A673 (cell line): ENCODE measurements at regions of chr17 and their contacts with region 1.

Region 1: GRCh38 chr17:74961657-74962490 is 10.7 kb downstream of the HID1 start:
- DNase-seq: peak; percentile 91
- H3K4me3 ChIP-seq: no peak overlapping the region
- H3K27ac ChIP-seq: no peak overlapping the region
- H3K4me1 ChIP-seq: no peaks in the 10 kb centered on the region
- H3K27me3 ChIP-seq: no peaks in the 10 kb centered on the region
- CTCF ChIP-seq: peak; percentile 75

Region 2: DNA sequence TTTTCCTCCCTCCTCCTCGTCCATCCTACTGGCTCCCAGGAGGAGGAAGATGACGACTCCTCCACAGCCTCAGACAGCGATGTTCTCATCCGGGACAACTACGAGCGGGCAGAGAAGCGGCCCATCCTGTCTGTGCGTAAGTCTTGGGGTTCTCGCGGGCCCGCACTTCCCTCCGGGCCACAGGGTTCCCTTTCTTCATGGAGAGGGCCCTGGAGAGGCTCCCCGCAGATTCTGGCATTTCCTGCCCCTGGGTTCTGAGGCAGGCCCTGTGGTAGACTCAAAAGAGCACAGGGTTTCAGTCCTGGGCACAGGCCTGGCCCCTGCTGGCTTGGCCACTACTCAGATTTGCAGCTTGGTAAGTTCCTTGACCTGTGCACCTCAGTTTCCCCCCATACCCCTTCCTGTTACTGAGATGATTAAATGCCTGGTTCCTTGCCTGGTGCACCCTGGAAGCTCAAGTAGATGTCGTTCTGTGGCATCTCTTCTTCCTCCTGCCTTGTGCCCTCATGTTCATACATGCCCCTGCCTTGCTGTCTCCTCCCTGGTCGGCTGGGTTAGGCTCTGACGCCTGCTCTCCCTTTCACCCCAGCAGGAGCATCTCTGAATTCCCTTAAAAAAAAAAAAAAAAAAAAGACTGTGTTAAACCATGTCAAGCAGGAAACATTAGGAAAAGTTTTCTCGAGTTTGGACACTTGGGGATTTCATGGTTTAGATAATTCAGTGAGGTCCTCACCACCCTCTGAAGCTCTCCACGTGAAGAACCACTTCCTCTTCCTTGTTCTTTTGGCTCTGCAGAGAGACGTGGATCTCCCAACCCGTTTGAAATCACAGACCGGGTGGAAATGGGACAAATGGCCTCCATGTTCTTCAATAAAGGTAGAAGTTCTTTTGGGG is 171.5 kb before region 1 on chr17:
- CTCF ChIA-PET with region 1: interaction called, 9 read pairs
- POLR2A ChIA-PET with region 1: no interaction called
- intact Hi-C with region 1: loop called (anchors 1 kb)
- DNase-seq: peak; percentile 30
- H3K4me3 ChIP-seq: no peak overlapping the region
- H3K27ac ChIP-seq: no peak overlapping the region
- H3K4me1 ChIP-seq: no peaks in the 10 kb centered on the region
- H3K27me3 ChIP-seq: no peaks in the 10 kb centered on the region
- CTCF ChIP-seq: no peak

Region 3: DNA sequence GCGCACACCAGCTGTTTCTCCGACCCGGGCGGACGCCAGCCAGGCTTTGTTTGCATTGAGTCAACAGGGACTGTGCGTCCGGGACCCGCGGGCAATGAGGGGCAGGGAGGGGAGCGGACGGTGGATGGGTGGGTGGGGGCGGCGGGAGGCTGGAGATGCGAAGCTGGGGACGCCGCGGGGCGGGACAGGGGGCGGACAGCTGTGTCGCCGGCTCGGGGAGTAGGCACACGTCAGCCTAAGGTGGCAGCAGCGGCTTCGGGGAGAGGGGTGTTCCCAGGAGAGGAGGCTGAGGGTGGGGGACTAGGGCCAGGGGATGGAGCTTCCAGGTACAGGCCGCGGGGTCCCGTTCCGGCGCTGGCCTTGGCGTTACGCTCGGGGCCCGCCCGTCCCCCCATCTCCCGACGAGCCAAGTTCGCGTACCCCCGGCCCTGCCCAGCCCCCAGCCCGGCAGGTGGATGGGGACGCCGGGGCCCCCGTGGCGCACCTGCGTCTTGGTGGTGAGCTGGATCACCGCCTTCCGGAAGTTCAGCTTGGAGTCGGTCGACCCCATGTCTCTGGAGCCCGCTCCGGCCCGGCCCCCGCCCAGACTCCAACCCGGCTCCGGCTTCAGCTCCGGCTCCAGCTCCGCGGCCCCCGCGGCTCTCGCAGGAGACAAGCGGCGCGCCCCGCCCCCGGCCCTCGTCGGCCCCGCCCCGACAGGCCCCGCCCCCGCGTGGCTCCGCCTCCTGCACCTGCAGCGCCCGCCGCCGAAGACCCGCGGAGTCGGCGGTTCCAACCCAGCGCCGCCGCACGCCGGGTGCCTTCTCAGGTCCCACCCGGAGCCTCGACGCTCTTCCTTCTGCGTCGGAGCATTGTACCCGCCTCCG is 10.5 kb after region 1 on chr17 and contains the start of gene HID1:
- CTCF ChIA-PET with region 1: interaction called, 11 read pairs
- POLR2A ChIA-PET with region 1: interaction called, 4 read pairs
- intact Hi-C with region 1: no loop called
- DNase-seq: peak; percentile 71
- H3K4me3 ChIP-seq: peak within 1 kb of the TSS; percentile 56
- H3K27ac ChIP-seq: no peak within 1 kb of the TSS
- H3K4me1 ChIP-seq: no peaks in the 10 kb centered on the region
- H3K27me3 ChIP-seq: peaks cover 5% of the 10 kb centered on the region
- CTCF ChIP-seq: no peak
- total RNA-seq, gene HID1: 1.2 and 2.9 TPM in 2 replicates

Region 4: DNA sequence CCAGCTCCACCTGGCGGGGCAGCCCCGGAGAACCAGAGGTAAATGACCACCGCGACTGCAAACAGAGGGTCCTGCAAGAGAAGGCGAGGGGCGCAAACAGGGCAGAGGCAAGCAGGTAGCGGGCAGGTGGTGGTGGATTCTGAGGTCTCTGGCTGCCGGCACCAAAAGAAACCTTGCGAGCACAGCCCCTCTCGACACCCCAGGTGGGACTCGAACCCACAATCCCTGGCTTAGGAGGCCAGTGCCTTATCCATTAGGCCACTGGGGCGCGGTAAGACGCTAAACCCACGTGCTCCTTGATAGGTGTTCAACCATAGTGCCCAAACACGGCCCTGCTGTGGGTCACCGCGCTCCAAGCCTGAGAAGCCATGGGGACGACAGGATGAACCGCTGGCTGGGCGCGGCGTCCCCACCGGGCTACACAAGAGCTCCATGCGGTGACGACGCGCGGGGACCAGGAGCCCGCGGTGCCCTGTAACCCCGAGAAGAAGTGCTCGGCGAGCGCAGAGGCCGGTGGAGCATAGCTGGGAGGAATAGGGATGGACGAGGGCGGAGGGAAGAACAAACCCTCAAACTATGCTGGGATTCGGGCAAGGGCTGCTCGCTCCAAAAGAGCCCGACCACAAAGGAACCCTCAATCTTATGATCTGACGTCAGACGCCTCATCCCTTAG is 72.5 kb after region 1 on chr17:
- CTCF ChIA-PET with region 1: interaction called, 4 read pairs
- POLR2A ChIA-PET with region 1: no interaction called
- intact Hi-C with region 1: loop called (anchors 5 kb)
- DNase-seq: peak; percentile 96
- H3K4me3 ChIP-seq: peak overlapping the region; percentile 85
- H3K27ac ChIP-seq: peak overlapping the region; percentile 98
- H3K4me1 ChIP-seq: peaks cover 18% of the 10 kb centered on the region
- H3K27me3 ChIP-seq: no peaks in the 10 kb centered on the region
- CTCF ChIP-seq: 0 out of 2 replicates have a peak, but pooled peaks have one; percentile 23

Region 5: DNA sequence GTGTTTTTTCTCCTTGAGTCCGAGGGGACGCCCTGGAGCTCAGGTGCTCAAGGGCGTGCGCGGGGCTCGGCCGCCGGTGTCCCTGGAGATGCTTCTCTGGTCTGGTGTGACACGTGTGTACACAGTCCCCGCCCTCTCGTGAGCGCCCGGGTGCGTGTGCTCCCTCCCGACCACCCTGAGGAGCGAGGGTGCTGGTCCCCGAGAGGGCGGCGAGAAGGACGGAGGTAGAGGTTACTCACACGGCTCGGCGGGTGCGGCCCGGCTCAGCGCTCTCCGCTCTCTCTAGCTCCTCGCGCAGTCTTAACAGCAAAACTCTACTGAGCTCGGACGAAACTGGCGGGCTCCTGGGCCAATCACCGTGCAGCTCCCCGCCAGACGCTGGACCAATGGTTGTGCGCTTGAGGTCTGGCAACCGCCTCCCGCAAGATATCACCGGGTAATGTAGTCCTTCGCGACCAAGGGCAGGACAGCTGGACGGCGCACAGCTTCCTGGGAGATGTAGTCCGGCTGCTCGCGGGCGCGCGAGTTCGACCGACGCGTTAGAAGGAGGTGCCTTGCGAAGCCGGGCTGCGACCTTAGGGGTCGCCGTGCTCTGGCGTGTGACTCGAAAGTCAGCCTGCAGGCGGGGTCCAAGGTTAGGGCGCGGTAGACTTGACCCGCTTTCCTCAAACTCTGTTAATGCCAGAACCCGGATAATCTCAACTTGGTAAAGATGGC is 327.4 kb after region 1 on chr17 and contains the start of gene SLC25A19:
- CTCF ChIA-PET with region 1: no interaction called
- POLR2A ChIA-PET with region 1: interaction called, 22 read pairs
- intact Hi-C with region 1: no loop called
- DNase-seq: peak; percentile 99
- H3K4me3 ChIP-seq: peak within 1 kb of the TSS; percentile 87
- H3K27ac ChIP-seq: peak within 1 kb of the TSS; percentile 90
- H3K4me1 ChIP-seq: no peaks in the 10 kb centered on the region
- H3K27me3 ChIP-seq: no peaks in the 10 kb centered on the region
- CTCF ChIP-seq: no peak
- total RNA-seq, gene SLC25A19: 40.0 and 45.0 TPM in 2 replicates